ENCODE measurements at regions of chr22 and their contacts with region 1.

Region 1: GRCh38 chr22:19143967-19144400 is 467 bp downstream of the ESS2 start:
- DNase-seq: peak in 11 of 42 donors; percentile 7 to 44 (median 24)

Region 2: GRCh38 chr22:19122143-19122751 is 21.7 kb before region 1 on chr22 and contains the start of gene DGCR2:
- intact Hi-C with region 1: loop called (anchors 2 kb)
- DNase-seq: peak; percentile 92 to 99 (median 98)

Region 3: DNA sequence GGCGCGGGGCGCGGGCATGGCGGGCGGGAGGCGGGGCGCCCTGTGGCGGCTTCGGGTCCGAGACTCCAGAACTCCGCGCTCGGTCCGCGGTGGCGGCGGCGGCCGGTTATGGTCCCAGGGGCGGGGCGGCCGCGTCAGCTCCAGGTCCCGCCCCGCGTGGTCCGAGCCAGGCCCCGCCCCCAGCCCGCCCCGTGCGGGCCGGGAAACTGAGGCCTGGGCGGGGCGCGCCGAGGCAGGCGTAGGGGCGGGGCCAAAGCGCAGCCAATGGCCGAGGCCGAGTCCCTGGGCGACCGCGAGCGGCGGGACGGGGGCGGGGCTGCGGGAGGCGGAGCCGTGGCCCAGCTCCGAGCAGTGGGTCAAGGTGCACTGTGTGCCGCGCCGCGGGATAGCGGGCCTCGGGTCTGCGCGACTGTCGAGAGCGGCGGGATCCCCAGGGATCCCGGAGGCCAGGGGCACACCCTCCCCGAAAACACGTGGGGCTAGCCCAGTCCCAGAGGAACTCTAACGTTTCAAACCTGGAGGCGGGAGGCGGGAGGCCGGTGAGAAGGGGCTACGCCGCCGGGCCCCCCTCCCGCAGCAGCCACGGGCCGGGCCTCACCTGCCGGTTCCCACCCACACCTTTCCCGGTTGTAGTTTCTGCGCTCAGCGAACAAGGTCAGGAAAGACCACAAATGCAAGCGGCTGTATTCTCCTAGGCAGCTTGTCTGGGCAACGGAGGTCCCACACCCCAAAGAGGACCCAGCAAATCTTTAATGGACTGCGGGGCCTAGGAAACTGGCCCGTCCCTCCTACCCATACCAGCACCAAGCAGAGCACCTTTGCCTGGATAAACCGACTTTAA is 34.9 kb after region 1 on chr22 and contains the start of gene SLC25A1:
- intact Hi-C with region 1: loop called (anchors 5 kb)
- DNase-seq: peak; percentile 80 to 97 (median 94)

Region 4: DNA sequence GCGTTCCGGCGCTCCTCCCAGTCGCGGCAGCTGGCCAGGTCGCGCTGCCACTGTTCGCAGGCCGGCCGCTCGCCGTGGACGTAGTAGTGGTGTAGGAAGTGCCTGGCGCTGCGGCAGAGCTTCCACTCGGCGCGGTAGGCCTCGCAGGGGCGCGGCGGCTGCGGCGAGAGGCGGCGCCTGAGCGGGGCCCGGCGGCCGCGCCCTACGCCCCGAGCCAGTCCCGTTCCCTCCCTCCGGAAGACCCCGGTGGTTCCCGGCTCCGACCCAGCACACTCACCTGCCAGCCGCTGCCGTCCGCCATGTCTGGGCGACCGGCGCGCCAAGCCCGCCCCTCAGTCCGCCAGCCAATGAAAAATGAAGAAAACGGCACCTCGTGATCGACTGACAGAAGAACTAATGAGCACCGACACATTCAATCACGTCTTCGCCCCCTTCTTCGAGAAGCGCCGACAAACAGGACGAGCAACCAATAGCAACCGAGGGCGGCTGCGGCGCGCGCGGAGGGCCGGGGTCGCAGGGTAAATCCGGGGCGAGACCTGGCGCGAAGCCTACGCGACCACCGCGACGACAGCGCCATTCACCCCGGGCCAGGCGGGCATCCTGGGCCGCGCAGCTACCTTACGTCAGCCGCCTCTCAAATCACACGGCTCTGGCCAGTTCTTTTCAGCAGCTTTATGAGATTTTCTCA is 303.5 kb after region 1 on chr22 and contains the start of gene C22orf39:
- intact Hi-C with region 1: loop called (anchors 10 kb)
- DNase-seq: peak; percentile 90 to 98 (median 96)

Region 5: DNA sequence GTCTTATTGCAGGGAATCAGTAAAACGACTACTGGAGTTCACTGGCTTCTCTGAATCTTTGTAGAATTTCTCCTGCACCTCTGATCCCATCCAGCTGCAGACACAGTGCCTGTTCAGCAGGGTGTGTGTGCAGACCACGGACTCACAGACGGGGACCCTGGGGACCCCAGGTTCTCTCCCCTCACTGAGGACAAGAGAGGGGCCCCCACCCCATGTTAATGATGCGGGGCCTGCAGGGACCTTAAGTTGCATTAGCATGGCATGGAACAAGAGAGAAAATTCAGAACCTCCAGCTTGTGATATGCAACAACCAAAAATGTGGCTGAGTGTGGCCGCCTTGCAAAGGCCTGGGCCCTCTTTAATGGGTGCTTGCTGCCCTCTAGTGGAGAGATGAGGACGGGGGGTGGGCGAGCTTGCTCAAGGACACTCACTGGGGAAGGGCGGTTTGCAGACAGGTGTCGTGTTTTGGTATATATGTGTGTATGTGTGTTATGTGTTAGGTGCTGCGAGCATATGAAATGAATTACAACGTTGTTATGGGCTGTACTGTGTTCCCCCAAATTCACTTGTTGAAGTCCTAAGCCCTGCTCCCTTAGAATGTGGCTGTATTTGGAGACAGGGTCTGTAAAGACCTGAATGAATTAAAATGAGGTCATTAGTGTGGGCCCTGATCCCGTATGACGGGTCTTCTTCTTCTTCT is 485.9 kb after region 1 on chr22:
- intact Hi-C with region 1: loop called (anchors 10 kb)
- DNase-seq: peak; percentile 70 to 91 (median 83)

Measured in head of caudate nucleus (tissue), 42 donors.